ENCODE measurements at regions of chr4 and their contacts with region 1.

Region 1: DNA sequence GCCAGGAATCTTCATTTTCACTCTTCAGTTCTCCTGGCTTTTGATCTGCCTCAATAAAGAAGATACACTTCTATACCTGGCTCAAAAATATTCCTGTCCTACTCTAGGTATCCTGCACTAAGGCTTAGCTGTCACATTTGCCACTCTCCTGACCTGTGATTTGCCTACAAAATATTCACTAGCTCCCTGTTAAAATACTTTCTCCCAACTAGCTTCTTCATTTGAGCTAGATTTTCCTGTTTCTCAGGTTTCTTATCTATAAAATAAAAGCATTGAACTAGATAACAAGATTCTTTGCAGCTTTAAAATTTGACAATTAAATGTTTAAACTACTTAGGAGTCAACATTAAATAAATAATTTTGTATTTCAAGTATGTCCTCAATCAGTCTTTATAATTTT is 53.2 kb downstream of the CHIC2 start:
- DNase-seq: no peak
- ATAC-seq: no peak
- H3K4me3 ChIP-seq: no peak overlapping the region
- H3K4me3 Mint-ChIP-seq: no peak overlapping the region
- H3K27ac ChIP-seq: no peak overlapping the region
- H3K27ac Mint-ChIP-seq: no peak overlapping the region
- H3K4me1 ChIP-seq: no peaks in the 10 kb centered on the region
- H3K4me1 Mint-ChIP-seq: peaks cover 0 to 24% (median 6%) of the 10 kb centered on the region in 7 donors
- H3K27me3 ChIP-seq: no peaks in the 10 kb centered on the region
- H3K27me3 Mint-ChIP-seq: no peaks in the 10 kb centered on the region

Region 2: GRCh38 chr4:54056360-54056759 is 45.2 kb after region 1 on chr4:
- CTCF ChIA-PET with region 1: no interaction called
- POLR2A ChIA-PET with region 1: no interaction called
- intact Hi-C with region 1: loop called in 1 of 2 experiments (anchors 2 kb)
- DNase-seq: peak in 4 of 9 donors; percentile 27 to 44 (median 32)
- ATAC-seq: peak; percentile 70
- H3K4me3 ChIP-seq: no peak overlapping the region
- H3K4me3 Mint-ChIP-seq: peak overlapping the region in 9 of 10 donors; percentile 39 to 96 (median 78)
- H3K27ac ChIP-seq: no peak overlapping the region
- H3K27ac Mint-ChIP-seq: peak overlapping the region in 4 of 9 donors; percentile 12 to 43 (median 22)
- H3K4me1 ChIP-seq: peaks cover 35 to 43% of the 10 kb centered on the region in 2 donors
- H3K4me1 Mint-ChIP-seq: peaks cover 46 to 89% (median 77%) of the 10 kb centered on the region in 7 donors
- H3K27me3 ChIP-seq: no peaks in the 10 kb centered on the region
- H3K27me3 Mint-ChIP-seq: no peaks in the 10 kb centered on the region

Region 3: DNA sequence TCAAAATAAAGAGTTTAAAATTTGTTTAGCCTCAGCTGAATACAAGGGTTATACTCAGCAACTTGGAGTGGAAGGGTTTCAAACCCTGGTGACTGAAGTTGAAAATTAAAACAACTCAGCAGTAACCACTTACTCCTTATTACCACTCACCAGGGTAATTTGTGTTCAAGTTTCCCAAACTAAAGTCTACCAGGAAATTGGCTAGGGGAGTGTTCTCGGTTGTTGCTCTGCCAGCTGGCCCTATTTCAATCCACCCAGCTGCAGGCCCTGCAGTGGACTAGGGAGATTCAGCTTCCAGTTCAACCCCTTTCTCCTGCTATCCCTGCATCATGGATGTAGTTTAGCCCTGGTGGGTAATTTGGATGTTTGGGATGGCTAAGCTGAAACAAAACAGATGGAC is 1770.6 kb after region 1 on chr4:
- CTCF ChIA-PET with region 1: no interaction called
- POLR2A ChIA-PET with region 1: no interaction called
- intact Hi-C with region 1: no loop called
- DNase-seq: no peak
- ATAC-seq: no peak
- H3K4me3 ChIP-seq: no peak overlapping the region
- H3K4me3 Mint-ChIP-seq: no peak overlapping the region
- H3K27ac ChIP-seq: no peak overlapping the region
- H3K27ac Mint-ChIP-seq: no peak overlapping the region
- H3K4me1 ChIP-seq: no peaks in the 10 kb centered on the region
- H3K4me1 Mint-ChIP-seq: no peaks in the 10 kb centered on the region
- H3K27me3 ChIP-seq: no peaks in the 10 kb centered on the region
- H3K27me3 Mint-ChIP-seq: peaks cover 0 to 19% (median 7%) of the 10 kb centered on the region in 5 donors